Activated CD8-positive, alpha-beta T cell treated with anti-CD3 and anti-CD28 coated beads, Interleukin-2, amount 10 ng/mL, durations not matched to agents 7 days and 5 days (primary cell): ENCODE measurements at regions of chr12 and their contacts with region 1.

Region 1: GRCh38 chr12:7638760-7639555 is 26.8 kb downstream of the APOBEC1 start:
- DNase-seq: peak; percentile 89
- ATAC-seq: peak; percentile 82
- H3K4me3 Mint-ChIP-seq: peak overlapping the region; percentile 47
- H3K27ac Mint-ChIP-seq: peak overlapping the region; percentile 75
- H3K4me1 Mint-ChIP-seq: peaks cover 29% of the 10 kb centered on the region
- H3K27me3 Mint-ChIP-seq: peaks cover 3% of the 10 kb centered on the region

Region 2: DNA sequence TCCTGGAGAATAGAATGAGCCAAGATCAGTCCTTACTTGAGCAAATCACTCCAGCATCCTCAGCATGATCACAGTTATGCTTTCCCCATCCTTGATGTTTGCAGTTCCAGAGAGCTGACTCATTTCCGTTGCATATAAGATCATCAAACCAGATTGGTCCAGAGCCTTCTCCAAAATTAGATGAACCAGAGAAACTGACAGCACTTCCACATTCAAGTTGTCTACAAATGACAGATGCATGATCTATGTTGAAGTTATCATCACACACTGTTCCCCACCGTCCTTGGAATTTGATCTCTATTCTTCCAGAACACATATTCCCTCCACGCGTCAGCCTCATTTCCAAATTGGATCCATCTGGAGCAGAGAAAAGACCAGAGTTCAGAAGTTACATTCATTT is 140.1 kb before region 1 on chr12:
- CTCF ChIA-PET with region 1: no interaction called
- POLR2A ChIA-PET with region 1: no interaction called
- DNase-seq: no peak
- ATAC-seq: no peak
- H3K4me3 Mint-ChIP-seq: no peak overlapping the region
- H3K27ac Mint-ChIP-seq: no peak overlapping the region
- H3K4me1 Mint-ChIP-seq: no peaks in the 10 kb centered on the region
- H3K27me3 Mint-ChIP-seq: peaks cover 22% of the 10 kb centered on the region

Region 3: DNA sequence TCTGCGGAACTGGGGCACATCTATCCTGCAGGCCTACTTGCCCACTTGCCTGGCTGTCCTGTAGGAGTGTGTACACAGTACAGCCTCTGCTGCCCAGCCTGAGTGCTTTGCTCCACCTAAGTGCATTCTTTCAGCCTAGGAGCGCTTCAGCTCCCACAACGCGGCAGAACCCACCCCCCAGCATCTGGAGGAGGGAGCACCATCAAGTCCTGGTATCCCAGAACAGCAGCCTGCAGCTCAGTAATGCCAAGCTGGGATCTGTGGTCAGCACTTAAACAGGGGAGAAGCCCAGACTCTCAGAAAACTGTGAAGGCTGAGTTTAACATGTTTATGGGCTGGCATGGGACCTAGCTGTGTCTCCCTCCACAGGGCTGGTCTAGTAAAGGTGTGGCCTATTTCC is 55.4 kb before region 1 on chr12:
- CTCF ChIA-PET with region 1: interaction called, 16 read pairs
- POLR2A ChIA-PET with region 1: no interaction called
- DNase-seq: no peak
- ATAC-seq: no peak
- H3K4me3 Mint-ChIP-seq: no peak overlapping the region
- H3K27ac Mint-ChIP-seq: no peak overlapping the region
- H3K4me1 Mint-ChIP-seq: no peaks in the 10 kb centered on the region
- H3K27me3 Mint-ChIP-seq: peaks cover 18% of the 10 kb centered on the region

Region 4: DNA sequence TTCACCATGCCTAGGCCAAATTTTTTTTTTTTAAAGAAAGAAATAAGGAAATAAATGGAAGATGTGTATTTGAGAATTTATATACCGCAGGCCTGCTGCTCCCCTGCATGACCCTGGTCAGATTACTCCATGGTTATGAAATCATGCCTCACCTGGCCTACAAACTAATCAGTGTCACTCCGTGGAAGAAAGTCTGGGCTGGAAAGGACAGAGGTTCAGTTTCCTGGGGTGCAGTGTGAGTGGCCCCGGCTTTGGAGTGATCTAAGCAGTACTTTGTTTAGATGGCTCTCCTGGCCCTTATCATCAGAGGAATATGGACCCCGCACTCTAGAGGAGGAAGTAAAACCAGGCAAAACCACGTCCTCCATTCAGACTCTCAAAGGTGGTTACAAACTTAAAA is 17.2 kb after region 1 on chr12:
- CTCF ChIA-PET with region 1: interaction called, 10 read pairs
- POLR2A ChIA-PET with region 1: no interaction called
- DNase-seq: no peak
- ATAC-seq: no peak
- H3K4me3 Mint-ChIP-seq: no peak overlapping the region
- H3K27ac Mint-ChIP-seq: no peak overlapping the region
- H3K4me1 Mint-ChIP-seq: no peaks in the 10 kb centered on the region
- H3K27me3 Mint-ChIP-seq: no peaks in the 10 kb centered on the region

Region 5: DNA sequence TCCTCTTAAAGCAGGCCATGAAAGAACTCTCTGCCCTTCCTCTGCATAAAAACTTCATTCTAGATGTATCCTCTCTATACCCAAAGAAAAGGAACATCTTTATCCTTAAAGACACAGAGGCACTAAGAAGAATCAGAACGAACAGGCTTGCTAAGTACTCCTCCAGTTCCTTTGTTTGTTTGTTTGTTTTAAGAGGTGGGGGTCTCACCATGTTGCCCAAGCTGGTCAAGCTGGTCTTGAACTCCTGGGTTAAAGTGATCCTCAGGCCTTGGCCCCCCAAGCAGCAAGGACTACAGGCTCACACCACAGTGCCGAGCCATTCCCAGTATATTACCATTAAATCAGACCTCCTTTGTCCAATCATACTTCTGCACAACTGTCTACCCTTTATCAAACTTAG is 42.6 kb after region 1 on chr12:
- CTCF ChIA-PET with region 1: no interaction called
- POLR2A ChIA-PET with region 1: no interaction called
- DNase-seq: no peak
- ATAC-seq: no peak
- H3K4me3 Mint-ChIP-seq: no peak overlapping the region
- H3K27ac Mint-ChIP-seq: no peak overlapping the region
- H3K4me1 Mint-ChIP-seq: peaks cover 7% of the 10 kb centered on the region
- H3K27me3 Mint-ChIP-seq: no peaks in the 10 kb centered on the region

Region 6: GRCh38 chr12:7806863-7807487 is 168.0 kb after region 1 on chr12:
- CTCF ChIA-PET with region 1: interaction called, 39 read pairs
- POLR2A ChIA-PET with region 1: no interaction called
- DNase-seq: peak; percentile 71
- ATAC-seq: peak; percentile 60
- H3K4me3 Mint-ChIP-seq: no peak overlapping the region
- H3K27ac Mint-ChIP-seq: no peak overlapping the region
- H3K4me1 Mint-ChIP-seq: no peaks in the 10 kb centered on the region
- H3K27me3 Mint-ChIP-seq: peaks cover 3% of the 10 kb centered on the region